ENCODE measurements at regions of chr4 and their contacts with region 1.

Region 1: GRCh38 chr4:73662709-73663546 is 42.7 kb upstream of the RASSF6 start:
- DNase-seq: no peak
- ATAC-seq: peak; percentile 91
- H3K4me3 ChIP-seq: no peak overlapping the region
- H3K27ac ChIP-seq: no peak overlapping the region
- H3K4me1 ChIP-seq: no peaks in the 10 kb centered on the region
- H3K27me3 ChIP-seq: no peaks in the 10 kb centered on the region; a peak in 1 of 4 replicates
- CTCF ChIP-seq: peak; percentile 27 to 66 (median 48); a peak in 5 of 6 replicates
- EP300 ChIP-seq: no peak
- POLR2A ChIP-seq: no peak
- RAD21 ChIP-seq: peak; percentile 55

Region 2: DNA sequence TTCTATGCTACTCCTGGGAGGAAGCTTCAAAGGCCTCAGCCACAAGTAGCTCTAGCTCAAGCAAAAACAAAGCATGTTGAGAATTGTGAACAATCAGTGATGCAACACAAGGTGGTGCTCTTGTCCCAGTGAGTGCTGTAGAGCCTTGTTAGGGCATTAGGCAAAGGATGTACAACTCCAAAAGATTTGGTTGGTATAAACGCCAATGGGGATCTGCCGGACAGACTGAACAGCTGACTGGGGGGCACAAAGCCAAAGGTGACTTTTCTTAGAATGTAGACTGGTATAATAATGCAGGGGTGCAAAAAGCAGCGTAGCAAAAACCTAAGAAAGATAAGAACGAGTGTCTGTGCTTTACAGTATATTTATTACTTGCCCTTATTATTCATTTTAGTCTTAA is 321.5 kb before region 1 on chr4:
- CTCF ChIA-PET with region 1: interaction called, 12 read pairs
- POLR2A ChIA-PET with region 1: no interaction called
- RAD21 ChIA-PET with region 1: interaction called, 3 read pairs
- SMC1A ChIA-PET with region 1: interaction called, 12 read pairs
- in situ Hi-C with region 1: loop called (anchors 5 kb)
- intact Hi-C with region 1: no loop called
- DNase-seq: peak; percentile 16
- ATAC-seq: peak; percentile 90
- H3K4me3 ChIP-seq: no peak overlapping the region
- H3K27ac ChIP-seq: no peak overlapping the region
- H3K4me1 ChIP-seq: no peaks in the 10 kb centered on the region
- H3K27me3 ChIP-seq: no peaks in the 10 kb centered on the region
- CTCF ChIP-seq: peak; percentile 44 to 71 (median 57); a peak in 4 of 6 replicates
- EP300 ChIP-seq: no peak
- POLR2A ChIP-seq: no peak
- RAD21 ChIP-seq: peak; percentile 82

Region 3: GRCh38 chr4:73539386-73539785 is 123.5 kb before region 1 on chr4:
- CTCF ChIA-PET with region 1: no interaction called
- POLR2A ChIA-PET with region 1: no interaction called
- RAD21 ChIA-PET with region 1: no interaction called
- SMC1A ChIA-PET with region 1: no interaction called
- in situ Hi-C with region 1: no loop called
- intact Hi-C with region 1: no loop called
- DNase-seq: no peak
- ATAC-seq: no peak
- H3K4me3 ChIP-seq: no peak overlapping the region
- H3K27ac ChIP-seq: no peak overlapping the region
- H3K4me1 ChIP-seq: peaks cover 5% of the 10 kb centered on the region; the same call in 1 of the 2 replicates
- H3K27me3 ChIP-seq: no peaks in the 10 kb centered on the region
- CTCF ChIP-seq: no peak
- EP300 ChIP-seq: no peak
- POLR2A ChIP-seq: no peak
- RAD21 ChIP-seq: no peak

Region 4: GRCh38 chr4:73741031-73741749 is 78.3 kb after region 1 on chr4:
- CTCF ChIA-PET with region 1: no interaction called
- POLR2A ChIA-PET with region 1: no interaction called
- RAD21 ChIA-PET with region 1: no interaction called
- SMC1A ChIA-PET with region 1: no interaction called
- in situ Hi-C with region 1: no loop called
- intact Hi-C with region 1: no loop called
- DNase-seq: no peak
- ATAC-seq: no peak
- H3K4me3 ChIP-seq: no peak overlapping the region
- H3K27ac ChIP-seq: no peak overlapping the region
- H3K4me1 ChIP-seq: no peaks in the 10 kb centered on the region
- H3K27me3 ChIP-seq: no peaks in the 10 kb centered on the region
- CTCF ChIP-seq: no peak
- EP300 ChIP-seq: no peak
- POLR2A ChIP-seq: no peak
- RAD21 ChIP-seq: no peak

Region 5: GRCh38 chr4:73803213-73803612 is 140.3 kb after region 1 on chr4:
- CTCF ChIA-PET with region 1: interaction called, 10 read pairs
- POLR2A ChIA-PET with region 1: no interaction called
- RAD21 ChIA-PET with region 1: no interaction called
- SMC1A ChIA-PET with region 1: interaction called, 5 read pairs
- in situ Hi-C with region 1: no loop called
- intact Hi-C with region 1: no loop called
- DNase-seq: no peak
- ATAC-seq: no peak
- H3K4me3 ChIP-seq: no peak overlapping the region
- H3K27ac ChIP-seq: no peak overlapping the region
- H3K4me1 ChIP-seq: no peaks in the 10 kb centered on the region
- H3K27me3 ChIP-seq: no peaks in the 10 kb centered on the region
- CTCF ChIP-seq: no peak
- EP300 ChIP-seq: no peak
- POLR2A ChIP-seq: no peak
- RAD21 ChIP-seq: peak; percentile 22; the same call in 1 of the 2 replicates

Region 6: GRCh38 chr4:73922766-73923630 is 260.1 kb after region 1 on chr4:
- CTCF ChIA-PET with region 1: interaction called, 3 read pairs
- POLR2A ChIA-PET with region 1: no interaction called
- RAD21 ChIA-PET with region 1: no interaction called
- SMC1A ChIA-PET with region 1: no interaction called
- in situ Hi-C with region 1: no loop called
- intact Hi-C with region 1: loop called (anchors 1 kb)
- DNase-seq: no peak
- ATAC-seq: no peak
- H3K4me3 ChIP-seq: no peak overlapping the region
- H3K27ac ChIP-seq: no peak overlapping the region
- H3K4me1 ChIP-seq: no peaks in the 10 kb centered on the region
- H3K27me3 ChIP-seq: no peaks in the 10 kb centered on the region
- CTCF ChIP-seq: no peak; a peak in 1 of 6 replicates
- EP300 ChIP-seq: no peak
- POLR2A ChIP-seq: no peak
- RAD21 ChIP-seq: peak; percentile 38

Region 7: GRCh38 chr4:74038161-74039064 is 375.5 kb after region 1 on chr4 and contains the start of gene CXCL3:
- CTCF ChIA-PET with region 1: no interaction called
- POLR2A ChIA-PET with region 1: no interaction called
- RAD21 ChIA-PET with region 1: interaction called, 3 read pairs
- SMC1A ChIA-PET with region 1: no interaction called
- in situ Hi-C with region 1: no loop called
- intact Hi-C with region 1: loop called (anchors 10 kb)
- DNase-seq: no peak
- ATAC-seq: peak; percentile 67
- H3K4me3 ChIP-seq: peak within 1 kb of the TSS; percentile 67
- H3K27ac ChIP-seq: no peak within 1 kb of the TSS
- H3K4me1 ChIP-seq: peaks cover 3% of the 10 kb centered on the region; the same call in 1 of the 2 replicates
- H3K27me3 ChIP-seq: peaks cover 3 to 8% of the 10 kb centered on the region in 2 experiments
- CTCF ChIP-seq: 0 out of 6 replicates have a peak, but pooled peaks of 2 of the 3 experiments have one; percentile 2 to 7
- EP300 ChIP-seq: no peak
- POLR2A ChIP-seq: no peak
- RAD21 ChIP-seq: no peak
- polyA plus RNA-seq, gene CXCL3: not detected